Caco-2 (cell line): ENCODE measurements at regions of chr17 and their contacts with region 1.

Region 1: GRCh38 chr17:7403977-7404736 is at the start of gene TMEM256:
- DNase-seq: peak; percentile 93 to 96
- H3K4me3 ChIP-seq: peak within 1 kb of the TSS; percentile 53
- H3K4me3 Mint-ChIP-seq: peak within 1 kb of the TSS; percentile 76
- H3K27ac Mint-ChIP-seq: peak within 1 kb of the TSS; percentile 76
- H3K4me1 ChIP-seq: no peaks in the 10 kb centered on the region
- H3K4me1 Mint-ChIP-seq: peaks cover 8% of the 10 kb centered on the region
- H3K27me3 ChIP-seq: no peaks in the 10 kb centered on the region
- H3K27me3 Mint-ChIP-seq: no peaks in the 10 kb centered on the region
- CTCF ChIP-seq: no peak
- total RNA-seq, gene TMEM256: 40.2 and 41.3 TPM in 2 replicates

Region 2: GRCh38 chr17:7351665-7352501 is 52.3 kb before region 1 on chr17 and contains the start of gene KCTD11:
- CTCF ChIA-PET with region 1: interaction called, 3 read pairs
- POLR2A ChIA-PET with region 1: no interaction called
- intact Hi-C with region 1: loop called (anchors 2 kb)
- DNase-seq: peak; percentile 88 to 90
- H3K4me3 ChIP-seq: peak within 1 kb of the TSS; percentile 63
- H3K4me3 Mint-ChIP-seq: peak within 1 kb of the TSS; percentile 83
- H3K27ac Mint-ChIP-seq: peak within 1 kb of the TSS; percentile 88
- H3K4me1 ChIP-seq: peaks cover 3% of the 10 kb centered on the region; the same call in 1 of the 2 replicates
- H3K4me1 Mint-ChIP-seq: peaks cover 11% of the 10 kb centered on the region
- H3K27me3 ChIP-seq: no peaks in the 10 kb centered on the region
- H3K27me3 Mint-ChIP-seq: no peaks in the 10 kb centered on the region
- CTCF ChIP-seq: peak in 1 of 2 experiments; percentile 37
- total RNA-seq, gene KCTD11: 5.1 and 5.4 TPM in 2 replicates

Region 3: GRCh38 chr17:7380321-7380720 is 23.8 kb before region 1 on chr17:
- CTCF ChIA-PET with region 1: interaction called, 7 read pairs
- POLR2A ChIA-PET with region 1: interaction called, 11 read pairs
- intact Hi-C with region 1: loop called (anchors 1 kb)
- DNase-seq: peak in 1 of 2 experiments; percentile 13
- H3K4me3 ChIP-seq: peak overlapping the region; percentile 55
- H3K4me3 Mint-ChIP-seq: peak overlapping the region; percentile 80
- H3K27ac Mint-ChIP-seq: peak overlapping the region; percentile 2
- H3K4me1 ChIP-seq: no peaks in the 10 kb centered on the region
- H3K4me1 Mint-ChIP-seq: peaks cover 7% of the 10 kb centered on the region
- H3K27me3 ChIP-seq: no peaks in the 10 kb centered on the region
- H3K27me3 Mint-ChIP-seq: no peaks in the 10 kb centered on the region
- CTCF ChIP-seq: no peak

Region 4: GRCh38 chr17:7427549-7427948 is 23.4 kb after region 1 on chr17:
- CTCF ChIA-PET with region 1: no interaction called
- POLR2A ChIA-PET with region 1: no interaction called
- intact Hi-C with region 1: no loop called
- DNase-seq: no peak
- H3K4me3 ChIP-seq: no peak overlapping the region
- H3K4me3 Mint-ChIP-seq: no peak overlapping the region
- H3K27ac Mint-ChIP-seq: no peak overlapping the region
- H3K4me1 ChIP-seq: no peaks in the 10 kb centered on the region
- H3K4me1 Mint-ChIP-seq: no peaks in the 10 kb centered on the region
- H3K27me3 ChIP-seq: no peaks in the 10 kb centered on the region
- H3K27me3 Mint-ChIP-seq: no peaks in the 10 kb centered on the region
- CTCF ChIP-seq: no peak

Region 5: DNA sequence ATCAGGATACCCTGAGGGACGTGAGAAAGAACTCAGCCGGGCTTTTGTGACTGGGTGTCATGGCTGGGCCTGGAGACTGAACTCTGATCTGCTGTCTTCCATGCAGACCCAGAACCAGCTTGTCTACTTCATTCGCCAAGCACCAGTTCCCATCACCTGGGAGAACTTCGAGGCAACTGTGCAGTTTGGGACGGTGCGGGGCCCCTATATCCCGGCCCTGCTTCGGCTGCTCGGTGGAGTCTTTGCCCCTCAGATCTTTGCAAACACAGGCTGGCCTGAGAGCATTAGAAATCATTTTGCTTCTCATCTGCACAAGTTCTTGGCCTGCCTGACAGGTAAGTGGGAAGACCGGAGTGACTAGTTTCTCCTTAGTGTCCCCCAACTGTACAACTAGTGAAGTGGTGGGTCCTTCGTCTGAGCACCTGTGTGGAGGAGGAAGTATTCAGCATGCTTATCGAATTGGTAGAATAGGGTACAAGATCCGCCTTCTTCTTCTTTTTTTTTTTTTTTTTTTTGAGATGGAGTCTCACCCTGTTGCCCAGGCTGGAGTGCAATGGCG is 328.9 kb after region 1 on chr17:
- CTCF ChIA-PET with region 1: no interaction called
- POLR2A ChIA-PET with region 1: no interaction called
- intact Hi-C with region 1: no loop called
- DNase-seq: no peak
- H3K4me3 ChIP-seq: no peak overlapping the region
- H3K4me3 Mint-ChIP-seq: no peak overlapping the region
- H3K27ac Mint-ChIP-seq: no peak overlapping the region
- H3K4me1 ChIP-seq: no peaks in the 10 kb centered on the region
- H3K4me1 Mint-ChIP-seq: no peaks in the 10 kb centered on the region
- H3K27me3 ChIP-seq: no peaks in the 10 kb centered on the region
- H3K27me3 Mint-ChIP-seq: peaks cover 7% of the 10 kb centered on the region
- CTCF ChIP-seq: no peak